ENCODE measurements at regions of chr13 and their contacts with region 1.

Region 1: GRCh38 chr13:109786457-109787134 is at the start of gene IRS2:
- DNase-seq: peak; percentile 95
- ATAC-seq: peak; percentile 91
- H3K4me3 Mint-ChIP-seq: peak within 1 kb of the TSS; percentile 74
- H3K27ac Mint-ChIP-seq: peak within 1 kb of the TSS; percentile 69
- H3K4me1 Mint-ChIP-seq: peaks cover 18% of the 10 kb centered on the region
- H3K27me3 Mint-ChIP-seq: no peaks in the 10 kb centered on the region
- total RNA-seq, gene IRS2: 1.4 to 1.5 TPM

Region 2: DNA sequence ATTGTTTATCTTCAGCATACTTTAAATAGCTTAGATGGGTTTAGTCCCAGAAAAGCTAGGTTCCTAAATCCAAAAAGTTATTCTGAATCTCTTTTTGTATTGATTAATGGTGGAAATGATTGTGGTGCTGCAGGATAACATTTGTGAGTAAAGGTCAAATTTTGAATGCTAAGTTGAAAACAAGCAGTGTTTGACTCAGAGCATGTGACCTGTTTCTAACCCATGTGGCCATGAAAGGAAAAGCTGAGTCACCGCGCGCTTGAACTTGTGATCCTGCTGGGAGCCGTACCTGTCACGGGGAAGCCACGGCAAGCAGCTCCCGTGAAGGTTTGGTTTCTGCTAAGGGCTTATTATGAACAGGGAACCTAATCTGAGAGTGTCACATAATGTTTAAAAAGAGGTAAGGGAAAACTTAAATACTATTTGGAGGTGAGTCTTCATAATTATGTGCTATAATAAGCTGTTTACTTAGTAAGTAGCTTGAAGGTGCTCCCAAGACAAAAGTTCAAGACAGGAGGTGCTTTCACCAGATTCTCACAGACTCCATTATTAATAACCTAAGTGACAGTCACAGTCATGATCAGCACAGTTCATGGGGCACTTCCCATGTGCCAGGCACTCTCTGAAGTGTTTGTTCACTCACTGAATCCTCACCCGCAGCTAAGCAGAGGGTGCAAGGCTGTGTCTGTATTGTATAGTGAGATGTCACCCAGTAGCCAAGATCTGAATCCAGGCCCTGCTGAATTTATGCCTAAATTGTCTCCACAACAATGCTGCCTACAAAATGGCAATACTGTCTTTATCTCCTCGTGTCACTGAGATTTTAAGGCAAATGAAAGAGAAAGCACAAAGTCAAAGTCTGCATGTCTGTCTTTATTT is 870.7 kb before region 1 on chr13:
- CTCF ChIA-PET with region 1: interaction called, 3 read pairs
- POLR2A ChIA-PET with region 1: no interaction called
- intact Hi-C with region 1: loop called (anchors 2 to 5 kb)
- DNase-seq: peak; percentile 95
- ATAC-seq: peak; percentile 97
- H3K4me3 Mint-ChIP-seq: peak overlapping the region; percentile 62
- H3K27ac Mint-ChIP-seq: peak overlapping the region; percentile 88
- H3K4me1 Mint-ChIP-seq: peaks cover 19% of the 10 kb centered on the region
- H3K27me3 Mint-ChIP-seq: peaks cover 8% of the 10 kb centered on the region

Region 3: DNA sequence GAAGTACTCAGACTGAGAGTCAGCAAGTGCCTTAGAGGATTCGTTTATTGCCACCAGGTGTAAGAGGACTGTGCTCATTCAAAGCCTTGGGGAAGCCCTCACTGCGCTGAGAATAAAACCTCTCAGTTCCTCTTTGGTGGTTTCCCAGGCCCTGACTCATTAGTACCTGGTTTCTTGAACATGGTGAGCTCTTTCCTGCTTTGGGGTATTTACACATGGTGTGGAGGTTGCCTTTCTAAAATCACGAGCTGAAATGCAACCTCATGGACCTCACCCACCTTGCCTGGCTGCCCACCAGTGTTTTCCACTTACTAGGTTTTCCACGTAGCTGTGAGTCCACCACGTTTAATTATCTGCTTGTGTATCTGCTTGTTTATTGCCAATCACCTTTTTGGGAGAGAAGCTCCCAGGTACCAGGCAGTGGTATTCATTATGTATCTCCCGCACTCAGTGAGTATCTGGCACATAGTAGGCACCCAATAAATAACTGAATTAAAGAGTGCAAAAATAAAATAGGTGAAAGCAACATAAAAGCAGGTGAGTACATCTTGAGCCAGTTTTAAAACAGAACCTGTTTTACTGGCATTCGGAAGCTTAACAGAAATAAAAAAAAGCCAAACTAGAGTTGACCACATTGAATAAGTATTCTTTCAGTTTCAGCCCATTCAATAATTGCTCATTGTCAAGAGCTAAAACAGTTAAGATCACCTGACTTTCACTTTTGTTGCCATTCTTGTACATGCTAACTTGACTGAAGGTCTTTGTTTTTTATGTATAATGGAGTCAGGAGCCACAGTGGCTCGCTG is 624.1 kb before region 1 on chr13:
- CTCF ChIA-PET with region 1: no interaction called
- POLR2A ChIA-PET with region 1: no interaction called
- intact Hi-C with region 1: loop called in 1 of 2 experiments (anchors 1 kb)
- DNase-seq: peak; percentile 74
- ATAC-seq: peak; percentile 98
- H3K4me3 Mint-ChIP-seq: no peak overlapping the region
- H3K27ac Mint-ChIP-seq: no peak overlapping the region
- H3K4me1 Mint-ChIP-seq: peaks cover 8% of the 10 kb centered on the region
- H3K27me3 Mint-ChIP-seq: peaks cover 19% of the 10 kb centered on the region

Region 4: DNA sequence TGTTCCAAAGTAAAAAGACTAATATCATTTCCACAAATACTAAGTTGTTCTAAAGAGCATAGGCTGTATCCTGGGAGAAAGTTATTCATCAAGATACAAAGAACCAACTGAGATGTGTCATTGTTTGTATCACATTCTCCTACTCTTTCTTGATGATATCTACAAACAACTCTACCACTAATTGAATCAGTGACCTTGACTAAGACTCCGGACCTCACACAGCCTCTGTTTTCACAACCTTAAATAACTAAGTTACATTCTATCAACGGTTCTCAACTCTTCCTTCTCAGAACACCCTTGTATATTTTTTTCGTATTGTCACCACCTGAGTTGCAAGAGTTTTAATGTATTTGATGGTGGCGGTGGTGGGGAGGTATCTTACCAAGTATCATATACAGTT is 12.8 kb before region 1 on chr13:
- CTCF ChIA-PET with region 1: no interaction called
- POLR2A ChIA-PET with region 1: no interaction called
- intact Hi-C with region 1: no loop called
- DNase-seq: no peak
- ATAC-seq: no peak
- H3K4me3 Mint-ChIP-seq: no peak overlapping the region
- H3K27ac Mint-ChIP-seq: no peak overlapping the region
- H3K4me1 Mint-ChIP-seq: peaks cover 33% of the 10 kb centered on the region
- H3K27me3 Mint-ChIP-seq: no peaks in the 10 kb centered on the region

Region 5: DNA sequence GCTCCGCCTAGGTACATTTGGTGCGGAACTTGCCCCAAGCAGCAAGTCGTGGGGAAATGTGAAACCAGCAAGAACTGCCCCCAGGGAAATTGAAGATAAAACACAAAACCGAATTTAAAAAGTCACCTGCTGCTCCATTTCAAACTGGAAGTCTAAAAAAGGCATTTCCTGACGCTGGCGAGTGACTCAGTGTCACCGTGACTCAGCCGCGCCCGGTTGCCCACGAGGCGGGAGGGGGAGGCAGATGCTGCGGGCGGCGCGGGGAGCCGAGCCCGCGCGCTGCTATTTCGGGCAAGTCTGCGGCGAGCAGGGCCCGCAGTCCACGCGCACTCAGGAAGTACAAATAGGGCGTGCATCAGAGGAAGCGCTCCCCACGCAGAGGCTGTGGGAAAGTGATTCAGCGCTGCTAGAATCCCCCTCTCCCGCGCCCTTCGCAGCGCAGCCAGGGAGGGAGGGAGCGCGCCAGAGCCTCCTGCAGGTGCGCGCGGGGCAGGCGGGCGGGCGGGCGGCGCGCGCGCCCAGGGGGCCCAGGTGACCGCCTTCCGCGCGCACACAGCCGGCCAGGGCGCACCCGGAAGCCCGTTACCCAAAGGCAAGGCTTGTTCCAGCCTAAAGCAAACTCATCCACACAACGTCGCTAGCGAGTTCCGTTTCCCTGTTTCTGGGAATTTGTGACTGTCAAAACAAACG is 351.6 kb after region 1 on chr13:
- CTCF ChIA-PET with region 1: interaction called, 3 read pairs
- POLR2A ChIA-PET with region 1: no interaction called
- intact Hi-C with region 1: loop called (anchors 1 to 10 kb)
- DNase-seq: peak; percentile 89
- ATAC-seq: peak; percentile 79
- H3K4me3 Mint-ChIP-seq: peak overlapping the region; percentile 68
- H3K27ac Mint-ChIP-seq: peak overlapping the region; percentile 59
- H3K4me1 Mint-ChIP-seq: peaks cover 10% of the 10 kb centered on the region
- H3K27me3 Mint-ChIP-seq: peaks cover 44% of the 10 kb centered on the region

Region 6: DNA sequence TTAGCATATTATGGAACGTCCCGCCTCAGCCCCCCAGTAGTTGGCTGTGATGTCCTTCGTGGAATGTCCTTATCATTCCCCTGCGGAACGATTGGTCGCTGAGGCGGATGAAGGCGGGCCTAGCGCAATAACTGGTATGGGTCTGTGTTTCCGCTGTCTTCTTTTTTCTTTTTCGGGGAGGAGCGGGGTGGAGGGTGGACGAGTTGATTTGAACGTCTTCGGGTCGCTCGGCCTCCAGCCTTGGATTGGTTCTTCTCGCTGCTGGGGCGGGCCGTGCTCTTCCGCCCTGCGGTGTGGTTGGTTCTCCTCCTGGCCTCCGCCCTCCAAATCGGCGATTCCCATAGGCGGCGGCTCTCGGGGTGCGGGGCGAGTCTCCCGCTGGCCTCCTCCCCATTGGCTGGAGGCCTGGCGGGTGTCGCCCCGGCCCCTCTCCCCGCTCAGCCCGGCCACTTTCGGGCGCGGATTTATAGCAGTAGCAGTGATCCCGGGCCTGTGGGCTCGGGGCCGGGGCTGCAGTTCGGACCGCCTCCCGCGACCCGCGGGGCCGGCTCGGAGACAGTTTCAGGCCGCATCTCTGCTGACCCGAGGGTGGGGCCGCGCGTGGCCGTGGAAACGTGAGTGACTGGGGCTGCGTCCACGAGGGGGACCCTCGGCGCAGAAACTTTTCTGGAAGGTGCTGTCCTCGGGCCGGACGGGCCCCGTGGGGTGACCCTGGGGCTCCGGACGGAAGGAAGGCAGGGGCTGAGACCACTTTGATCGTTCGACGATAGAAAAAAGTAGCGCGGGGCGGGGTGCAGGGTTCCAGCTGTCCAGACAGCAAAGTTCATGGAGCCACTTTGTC is 929.0 kb after region 1 on chr13:
- CTCF ChIA-PET with region 1: no interaction called
- POLR2A ChIA-PET with region 1: no interaction called
- intact Hi-C with region 1: loop called (anchors 2 to 10 kb)
- DNase-seq: peak; percentile 98
- ATAC-seq: peak; percentile 67
- H3K4me3 Mint-ChIP-seq: peak overlapping the region; percentile 87
- H3K27ac Mint-ChIP-seq: peak overlapping the region; percentile 97
- H3K4me1 Mint-ChIP-seq: peaks cover 29% of the 10 kb centered on the region
- H3K27me3 Mint-ChIP-seq: no peaks in the 10 kb centered on the region

Measured in activated CD4-positive, alpha-beta T cell treated with anti-CD3 and anti-CD28 coated beads for 36 hours (primary cell).